Activated T-helper 1 cell treated with anti-CD3 and anti-CD28 coated beads, Interleukin-12 subunit alpha, Interleukin-12 subunit beta, Interleukin-2, Interleukin-4 antibody, amounts not matched to agents 30 ng/mL and 10 ng/mL and 1 ng/mL, durations not matched to agents 14 hours and 24 hours and 36 hours (primary cell): ENCODE measurements at regions of chrX and their contacts with region 1.

Region 1: DNA sequence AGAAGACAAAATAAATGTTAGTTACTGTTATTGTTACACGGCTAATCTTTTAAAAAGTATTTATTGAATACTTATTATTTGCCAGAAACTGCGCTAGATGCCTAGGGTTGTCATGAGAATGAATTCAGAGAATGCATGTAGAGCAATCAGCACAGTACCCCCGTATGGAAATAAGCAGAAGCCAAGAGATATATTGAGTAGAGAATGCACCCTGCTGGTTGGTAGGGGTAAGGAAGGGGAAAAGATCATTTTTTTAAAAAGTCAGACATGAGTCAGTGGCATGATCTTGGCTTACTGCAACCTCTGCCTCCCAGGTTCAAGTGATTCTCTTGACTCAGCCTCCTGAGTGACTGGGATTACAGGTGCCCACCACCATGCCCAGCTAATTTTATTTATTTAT is 13.1 kb upstream of the DRP2 start:
- DNase-seq: no peak
- H3K4me3 Mint-ChIP-seq: no peak overlapping the region
- H3K27ac Mint-ChIP-seq: no peak overlapping the region
- H3K4me1 Mint-ChIP-seq: peaks cover 13% of the 10 kb centered on the region
- H3K27me3 Mint-ChIP-seq: no peaks in the 10 kb centered on the region

Region 2: GRCh38 chrX:100685284-100685996 is 521.0 kb before region 1 on chrX:
- intact Hi-C with region 1: loop called (anchors 5 kb)
- DNase-seq: peak; percentile 35
- H3K4me3 Mint-ChIP-seq: no peak overlapping the region
- H3K27ac Mint-ChIP-seq: no peak overlapping the region
- H3K4me1 Mint-ChIP-seq: peaks cover 12% of the 10 kb centered on the region
- H3K27me3 Mint-ChIP-seq: no peaks in the 10 kb centered on the region

Region 3: DNA sequence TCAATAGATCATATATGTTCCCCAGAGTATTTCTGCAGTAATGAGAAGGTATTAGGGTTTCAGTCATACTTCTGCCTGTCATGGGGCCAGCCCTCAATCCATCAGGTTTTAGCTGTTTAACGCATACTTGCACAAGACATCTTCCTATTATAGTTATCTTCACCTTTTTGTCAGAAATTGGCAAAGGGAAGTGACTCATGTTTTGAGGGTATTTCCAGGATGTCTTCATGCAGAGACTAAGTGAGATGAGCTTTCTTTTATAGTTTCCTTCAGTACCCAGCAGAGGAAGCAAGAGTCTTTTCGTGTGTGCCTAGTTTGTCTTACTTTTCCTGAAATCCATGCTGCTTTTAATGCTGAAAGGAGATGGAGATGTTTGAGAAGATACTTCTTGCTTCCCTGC is 376.7 kb before region 1 on chrX:
- intact Hi-C with region 1: loop called (anchors 1 kb)
- DNase-seq: no peak
- H3K4me3 Mint-ChIP-seq: peak overlapping the region; percentile 73
- H3K27ac Mint-ChIP-seq: peak overlapping the region; percentile 94
- H3K4me1 Mint-ChIP-seq: peaks cover 38% of the 10 kb centered on the region
- H3K27me3 Mint-ChIP-seq: no peaks in the 10 kb centered on the region

Region 4: GRCh38 chrX:100895365-100896075 is 311.0 kb before region 1 on chrX:
- intact Hi-C with region 1: loop called (anchors 1 kb)
- DNase-seq: no peak
- H3K4me3 Mint-ChIP-seq: no peak overlapping the region
- H3K27ac Mint-ChIP-seq: no peak overlapping the region
- H3K4me1 Mint-ChIP-seq: no peaks in the 10 kb centered on the region
- H3K27me3 Mint-ChIP-seq: no peaks in the 10 kb centered on the region

Region 5: DNA sequence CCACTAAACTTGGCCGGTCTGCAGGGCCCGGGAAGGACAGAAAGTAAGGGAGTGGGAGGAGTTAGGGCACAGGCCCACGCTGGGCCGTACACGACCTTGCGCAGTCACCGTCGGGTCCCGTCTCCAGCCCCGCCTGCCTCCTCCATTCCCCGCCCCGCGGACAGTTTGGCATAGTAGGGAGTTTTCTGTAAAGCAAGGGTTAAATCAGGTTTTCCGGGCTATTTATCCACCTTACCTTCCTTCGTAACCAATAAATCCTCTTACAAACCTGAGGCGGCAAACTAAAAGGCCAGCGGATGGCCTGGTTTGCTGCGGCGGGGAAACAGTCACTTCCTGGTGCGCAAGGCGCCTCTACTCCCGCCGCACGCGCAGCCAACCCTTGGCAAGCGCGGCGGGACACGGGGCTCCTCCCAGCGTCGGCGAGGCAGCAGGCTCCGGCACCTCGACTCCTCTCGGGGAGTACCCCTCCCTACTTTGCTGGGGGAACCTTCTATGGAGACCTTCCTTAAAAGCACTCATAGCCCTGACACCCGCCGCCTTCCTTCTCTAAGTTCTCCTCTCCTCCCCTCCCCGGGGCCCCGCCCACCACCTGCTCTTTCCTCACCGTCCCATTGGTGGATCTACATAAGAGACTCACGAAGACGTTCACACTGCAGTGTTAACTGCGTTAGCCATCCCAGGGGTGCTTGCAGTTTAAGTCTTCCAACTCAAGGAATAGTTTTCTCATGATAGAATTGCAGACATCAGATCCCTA is 154.7 kb before region 1 on chrX and contains the start of gene TRMT2B:
- intact Hi-C with region 1: no loop called
- DNase-seq: peak; percentile 72
- H3K4me3 Mint-ChIP-seq: peak within 1 kb of the TSS; percentile 88
- H3K27ac Mint-ChIP-seq: peak within 1 kb of the TSS; percentile 93
- H3K4me1 Mint-ChIP-seq: peaks cover 17% of the 10 kb centered on the region
- H3K27me3 Mint-ChIP-seq: no peaks in the 10 kb centered on the region
- total RNA-seq, gene TRMT2B: 17.2 and 19.3 TPM in 2 replicates

Region 6: GRCh38 chrX:101260431-101260830 is 54.0 kb after region 1 on chrX:
- intact Hi-C with region 1: no loop called
- DNase-seq: no peak
- H3K4me3 Mint-ChIP-seq: no peak overlapping the region
- H3K27ac Mint-ChIP-seq: no peak overlapping the region
- H3K4me1 Mint-ChIP-seq: peaks cover 6% of the 10 kb centered on the region
- H3K27me3 Mint-ChIP-seq: no peaks in the 10 kb centered on the region

Region 7: GRCh38 chrX:101287402-101287801 is 80.9 kb after region 1 on chrX:
- intact Hi-C with region 1: loop called (anchors 5 kb)
- DNase-seq: no peak
- H3K4me3 Mint-ChIP-seq: no peak overlapping the region
- H3K27ac Mint-ChIP-seq: no peak overlapping the region
- H3K4me1 Mint-ChIP-seq: no peaks in the 10 kb centered on the region
- H3K27me3 Mint-ChIP-seq: peaks cover 10% of the 10 kb centered on the region

Region 8: DNA sequence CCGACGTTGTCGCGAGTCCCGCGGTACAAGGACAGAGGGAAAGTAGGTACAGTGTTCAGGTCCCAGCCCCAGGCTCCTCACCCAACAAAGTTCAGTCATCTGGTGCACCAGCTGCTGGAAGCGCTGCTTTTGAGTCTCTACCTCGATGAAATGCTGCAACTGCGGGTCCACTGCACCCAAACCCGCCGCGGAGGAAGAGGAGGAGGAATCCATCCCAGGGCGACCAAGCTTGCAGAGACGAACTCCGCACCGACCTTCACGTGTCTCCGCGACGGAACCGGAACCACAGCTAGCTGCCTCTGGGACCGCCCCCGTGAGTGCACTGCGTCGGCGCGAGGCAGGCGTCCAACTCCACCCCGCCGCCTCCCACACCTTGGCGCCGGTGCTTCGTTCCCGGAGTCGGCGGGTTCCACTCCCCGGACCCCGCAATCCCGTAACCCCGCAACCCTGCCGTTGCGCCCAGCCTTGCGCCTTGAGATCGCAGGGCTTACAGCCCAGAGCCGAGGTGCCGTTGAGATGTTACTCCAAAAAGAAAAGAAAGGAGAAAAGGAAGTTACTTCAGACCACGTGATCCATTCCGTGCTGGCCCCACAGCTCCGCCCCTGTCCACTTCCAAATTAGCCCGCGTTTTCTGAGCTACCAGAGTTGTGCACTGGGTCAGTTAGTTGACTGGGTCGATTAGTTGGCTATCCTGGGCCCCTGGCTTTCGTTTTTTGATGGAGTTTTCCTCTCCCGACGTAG is 142.2 kb after region 1 on chrX and contains the start of gene TIMM8A:
- intact Hi-C with region 1: loop called (anchors 5 kb)
- DNase-seq: peak; percentile 72
- H3K4me3 Mint-ChIP-seq: peak within 1 kb of the TSS; percentile 90
- H3K27ac Mint-ChIP-seq: peak within 1 kb of the TSS; percentile 80
- H3K4me1 Mint-ChIP-seq: peaks cover 5% of the 10 kb centered on the region
- H3K27me3 Mint-ChIP-seq: no peaks in the 10 kb centered on the region
- total RNA-seq, gene TIMM8A: 30.9 and 36.5 TPM in 2 replicates